ENCODE measurements at regions of chr16 and their contacts with region 1.

Region 1: DNA sequence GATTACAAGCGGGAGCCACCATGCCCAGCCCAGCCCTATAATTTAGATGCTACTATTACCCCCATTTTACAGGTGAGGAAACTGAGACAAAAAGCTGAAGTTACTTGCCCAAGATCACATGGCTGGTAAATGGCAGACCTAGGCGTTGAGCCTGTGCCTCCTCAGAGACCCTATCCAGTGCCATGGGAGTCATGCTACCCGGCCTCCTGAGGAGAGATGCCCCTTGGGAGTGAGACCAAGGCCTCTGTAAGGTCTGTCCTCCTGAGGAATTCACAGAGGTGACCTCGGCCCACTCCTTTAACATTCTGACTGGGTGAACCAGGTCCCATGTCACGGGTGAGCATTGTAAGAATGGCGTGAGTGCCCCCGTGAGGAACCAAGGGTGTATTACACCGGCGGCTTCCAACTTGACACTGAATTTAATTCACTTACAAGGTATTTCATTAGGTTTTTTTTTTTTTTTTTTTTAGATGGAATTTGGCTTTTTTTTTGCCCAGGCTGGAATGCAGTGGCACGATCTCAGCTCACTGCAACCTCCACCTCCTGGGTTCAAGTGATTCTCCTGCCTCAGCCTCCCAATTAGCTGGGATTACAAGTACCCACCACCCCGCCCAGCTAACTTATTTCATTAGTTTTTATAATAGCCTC is 95.7 kb downstream of the ABCC6 start:
- DNase-seq: peak; percentile 84
- H3K4me3 ChIP-seq: no peak overlapping the region
- H3K27ac ChIP-seq: peak overlapping the region; percentile 32
- H3K4me1 ChIP-seq: peaks cover 15% of the 10 kb centered on the region
- CTCF ChIP-seq: peak; percentile 93

Region 2: GRCh38 chr16:15777533-15778203 is 349.9 kb before region 1 on chr16:
- CTCF ChIA-PET with region 1: no interaction called
- POLR2A ChIA-PET with region 1: no interaction called
- intact Hi-C with region 1: loop called (anchors 1 kb)
- DNase-seq: peak; percentile 86
- H3K4me3 ChIP-seq: no peak overlapping the region
- H3K27ac ChIP-seq: no peak overlapping the region
- H3K4me1 ChIP-seq: peaks cover 14% of the 10 kb centered on the region
- CTCF ChIP-seq: peak; percentile 88

Region 3: DNA sequence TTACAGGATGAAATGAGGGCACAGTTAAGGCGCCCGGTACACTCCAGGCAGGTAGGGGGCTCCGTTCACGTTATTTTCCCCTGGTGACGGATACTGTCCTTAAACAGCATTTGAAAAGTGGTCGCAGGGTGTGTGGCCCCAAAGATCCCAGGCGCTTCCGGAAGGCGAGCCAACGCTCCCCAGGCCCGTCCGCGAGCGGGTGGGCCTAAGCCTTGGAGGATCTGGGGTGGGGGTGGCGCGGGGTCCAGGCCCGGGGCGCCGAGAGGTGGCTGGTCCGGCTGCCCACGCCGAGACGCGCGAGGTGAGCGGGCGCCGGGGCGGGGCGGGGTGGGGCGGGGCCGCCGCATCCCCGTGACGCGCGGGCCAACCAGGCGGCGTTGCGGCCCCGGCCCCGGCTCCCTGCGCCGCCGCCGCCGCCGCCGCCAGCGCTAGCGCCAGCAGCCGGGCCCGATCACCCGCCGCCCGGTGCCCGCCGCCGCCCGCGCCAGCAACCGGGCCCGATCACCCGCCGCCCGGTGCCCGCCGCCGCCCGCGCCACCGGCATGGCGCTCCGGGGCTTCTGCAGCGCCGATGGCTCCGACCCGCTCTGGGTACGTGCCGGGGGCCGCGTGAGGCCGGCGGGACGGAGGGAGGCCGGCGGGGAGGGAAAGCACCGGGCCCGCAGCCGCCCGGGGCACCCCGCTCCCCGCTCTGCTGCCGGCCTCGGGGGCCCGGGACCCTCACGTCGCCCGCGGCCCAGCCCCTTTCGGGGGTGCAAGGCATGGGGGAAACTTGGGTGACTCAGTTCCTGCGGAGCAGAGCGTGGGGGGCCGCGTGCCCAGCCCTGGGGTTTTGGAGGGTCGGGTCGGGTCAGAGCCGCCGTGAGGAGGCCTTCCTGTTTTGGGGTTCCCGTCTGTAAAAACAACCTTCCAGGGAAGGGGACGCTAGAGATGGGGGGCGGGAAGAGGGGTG is 178.1 kb before region 1 on chr16 and contains the start of gene ABCC1:
- CTCF ChIA-PET with region 1: no interaction called
- POLR2A ChIA-PET with region 1: no interaction called
- intact Hi-C with region 1: loop called (anchors 10 kb)
- DNase-seq: peak; percentile 74
- H3K4me3 ChIP-seq: peak within 1 kb of the TSS; percentile 81
- H3K27ac ChIP-seq: peak within 1 kb of the TSS; percentile 78
- H3K4me1 ChIP-seq: peaks cover 40% of the 10 kb centered on the region
- CTCF ChIP-seq: peak; percentile 62
- total RNA-seq, gene ABCC1: 39.9 and 43.3 TPM in 2 replicates

Region 4: DNA sequence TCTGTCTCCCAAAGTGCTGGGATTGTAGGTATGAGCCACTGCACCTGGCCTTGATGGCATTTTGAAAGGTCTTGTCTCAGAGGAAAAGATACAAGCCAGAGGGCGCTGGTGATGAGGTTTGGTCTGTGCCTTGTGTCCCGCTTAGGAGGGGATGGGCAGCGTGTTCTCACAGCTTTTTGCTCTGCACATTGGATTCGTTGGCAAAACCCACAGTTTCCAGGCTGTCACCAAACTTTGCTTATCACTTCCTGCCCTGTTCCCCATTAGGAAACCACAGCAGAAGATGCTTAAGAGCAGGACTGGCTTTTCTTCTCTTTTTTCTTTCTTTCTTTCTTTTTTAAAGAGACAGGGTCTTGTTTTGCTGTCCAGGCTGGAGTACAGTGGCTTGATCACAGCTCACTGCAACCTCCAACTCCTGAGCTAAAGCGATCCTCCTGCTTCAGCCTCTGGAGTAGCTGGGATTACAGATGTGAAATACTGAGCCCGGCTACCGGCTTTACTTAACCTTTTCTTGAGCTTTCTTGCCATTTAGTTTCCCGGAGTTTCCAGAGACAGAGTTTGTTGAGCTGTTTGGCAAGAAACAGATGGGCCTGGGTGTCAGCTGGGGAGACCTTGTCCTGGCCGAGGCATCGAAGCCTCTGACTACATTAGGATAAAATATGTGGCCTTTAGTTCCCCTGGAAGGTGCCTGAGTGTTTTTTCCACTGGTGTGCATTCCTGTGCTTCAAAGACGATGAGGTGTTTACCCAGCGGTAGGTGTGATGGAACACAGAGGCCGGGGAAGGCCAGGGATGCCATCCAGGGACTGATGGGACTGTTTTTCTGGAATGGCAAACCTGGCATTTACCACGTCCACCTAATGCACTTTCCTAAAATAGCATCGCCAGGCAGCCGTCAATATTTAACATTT is 65.3 kb before region 1 on chr16:
- CTCF ChIA-PET with region 1: interaction called, 3 read pairs
- POLR2A ChIA-PET with region 1: no interaction called
- intact Hi-C with region 1: loop called (anchors 1 kb)
- DNase-seq: peak; percentile 70
- H3K4me3 ChIP-seq: peak overlapping the region; percentile 35
- H3K27ac ChIP-seq: peak overlapping the region; percentile 64
- H3K4me1 ChIP-seq: peaks cover 38% of the 10 kb centered on the region
- CTCF ChIP-seq: peak; percentile 72

Region 5: DNA sequence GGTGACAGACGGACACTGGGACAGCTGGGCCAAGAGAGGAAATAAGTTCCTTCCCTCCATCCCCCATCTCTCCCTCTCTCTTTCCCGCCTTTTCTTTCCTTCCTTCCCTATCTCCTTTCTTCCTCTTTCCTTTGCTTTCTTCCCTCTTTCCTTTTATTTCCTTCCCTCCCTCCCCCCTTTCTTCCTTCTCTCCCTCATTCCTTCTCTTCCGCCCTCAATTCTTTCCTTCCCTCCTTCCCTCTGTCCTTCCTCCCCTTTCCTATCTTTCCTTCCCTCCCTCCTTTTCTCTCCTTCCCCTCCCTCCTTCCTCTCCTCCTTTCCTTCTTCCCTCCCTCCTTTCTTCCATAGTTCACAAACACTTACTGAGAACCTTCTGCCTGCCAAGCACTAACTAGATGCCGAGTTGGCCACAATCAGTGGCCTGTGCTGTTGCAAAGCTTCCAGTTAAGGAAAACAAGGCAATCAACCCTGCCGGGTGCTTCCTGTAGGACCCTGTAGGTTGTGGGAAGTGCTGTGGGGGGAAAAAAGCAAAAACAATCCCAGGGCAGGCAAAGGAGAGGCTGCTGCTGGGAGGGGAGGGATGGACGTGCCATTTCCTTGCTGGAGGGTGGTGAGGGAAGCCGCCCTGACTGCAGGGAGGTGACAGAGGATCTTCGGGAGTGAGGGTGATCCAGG is 64.0 kb after region 1 on chr16:
- CTCF ChIA-PET with region 1: no interaction called
- POLR2A ChIA-PET with region 1: no interaction called
- intact Hi-C with region 1: no loop called
- DNase-seq: no peak
- H3K4me3 ChIP-seq: no peak overlapping the region
- H3K27ac ChIP-seq: no peak overlapping the region
- H3K4me1 ChIP-seq: peaks cover 4% of the 10 kb centered on the region
- CTCF ChIP-seq: no peak

Measured in OCI-LY7 (cell line).